Mammary epithelial cell (primary cell): ENCODE measurements at regions of chr6 and their contacts with region 1.

Region 1: DNA sequence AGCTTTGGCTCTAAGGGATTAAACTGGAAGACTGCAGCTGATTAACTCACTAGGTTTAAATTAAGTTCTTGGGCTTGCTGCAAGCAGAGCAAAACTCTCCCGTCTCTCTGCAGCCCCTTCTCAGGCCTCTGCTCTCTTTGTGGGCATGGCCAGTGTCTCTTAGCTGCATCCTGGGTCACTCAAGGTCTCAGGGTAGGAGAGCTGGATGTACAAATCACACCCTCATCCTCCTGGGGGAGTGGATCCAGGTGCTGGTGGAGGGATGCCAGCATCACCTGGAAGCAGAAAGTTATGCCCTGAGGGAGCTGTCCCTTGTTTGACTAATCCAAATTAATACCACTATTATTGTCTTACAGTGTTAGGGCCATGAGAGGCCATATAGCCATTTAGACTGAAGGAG is 35.8 kb downstream of the GCM1 start:
- DNase-seq: peak; percentile 77
- H3K4me3 ChIP-seq: no peak overlapping the region
- H3K27ac ChIP-seq: peak overlapping the region; percentile 68
- H3K4me1 ChIP-seq: peaks cover 30% of the 10 kb centered on the region
- H3K27me3 ChIP-seq: no peaks in the 10 kb centered on the region
- CTCF ChIP-seq: no peak

Region 2: GRCh38 chr6:52712136-52712535 is 400.8 kb before region 1 on chr6:
- CTCF ChIA-PET with region 1: no interaction called
- dilution Hi-C with region 1: no loop called
- in situ Hi-C with region 1: no loop called
- intact Hi-C with region 1: no loop called
- DNase-seq: peak; percentile 46
- H3K4me3 ChIP-seq: no peak overlapping the region
- H3K27ac ChIP-seq: no peak overlapping the region
- H3K4me1 ChIP-seq: peaks cover 2% of the 10 kb centered on the region
- H3K27me3 ChIP-seq: no peaks in the 10 kb centered on the region
- CTCF ChIP-seq: no peak

Region 3: GRCh38 chr6:52929321-52930164 is 183.3 kb before region 1 on chr6:
- CTCF ChIA-PET with region 1: no interaction called
- dilution Hi-C with region 1: no loop called
- in situ Hi-C with region 1: no loop called
- intact Hi-C with region 1: no loop called
- DNase-seq: peak; percentile 86
- H3K4me3 ChIP-seq: no peak overlapping the region
- H3K27ac ChIP-seq: peak overlapping the region; percentile 62
- H3K4me1 ChIP-seq: peaks cover 23% of the 10 kb centered on the region
- H3K27me3 ChIP-seq: peaks cover 2% of the 10 kb centered on the region
- CTCF ChIP-seq: peak in 1 of 2 donors; percentile 18

Region 4: DNA sequence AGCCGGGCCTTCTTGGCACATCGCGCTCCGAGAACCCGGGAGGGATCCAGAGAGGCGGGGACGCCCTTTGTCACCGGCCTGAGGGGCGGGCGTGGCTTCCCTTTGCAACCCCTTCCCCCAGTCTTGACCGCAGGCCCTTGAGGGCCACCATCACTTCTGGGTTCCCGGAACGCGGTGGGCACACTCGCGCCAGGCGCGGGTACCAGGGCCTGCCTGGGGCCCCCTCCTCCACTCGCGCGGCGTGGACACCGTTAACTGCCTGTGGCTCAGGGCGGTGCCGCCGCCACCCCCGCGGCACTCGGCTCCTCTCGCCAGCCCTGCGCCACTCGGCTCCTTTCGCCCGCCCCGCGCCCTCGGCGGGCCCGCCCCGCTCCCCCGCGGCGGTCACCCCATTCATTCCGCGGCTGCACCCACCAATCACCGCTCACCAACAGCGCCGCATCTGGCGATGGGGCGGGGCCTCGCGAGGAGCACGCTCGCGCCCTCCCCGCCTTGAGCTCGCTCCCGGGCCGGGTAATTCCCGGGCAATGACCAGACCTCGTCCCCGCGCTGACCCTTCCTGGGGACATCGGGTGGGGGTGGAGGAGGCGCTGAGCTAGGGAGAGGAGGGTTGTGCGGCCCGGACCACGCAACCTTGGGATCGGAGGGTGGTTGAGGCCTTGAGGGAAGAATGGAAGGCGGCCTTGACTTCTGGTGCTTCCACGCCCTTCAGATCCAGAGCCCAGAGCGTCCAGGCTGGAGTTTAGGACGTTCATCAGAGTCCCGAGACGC is 246.4 kb after region 1 on chr6:
- CTCF ChIA-PET with region 1: no interaction called
- dilution Hi-C with region 1: no loop called
- in situ Hi-C with region 1: no loop called
- intact Hi-C with region 1: loop called (anchors 1 kb)
- DNase-seq: peak; percentile 95
- H3K4me3 ChIP-seq: peak overlapping the region; percentile 45 to 60 (median 51)
- H3K27ac ChIP-seq: peak overlapping the region; percentile 93
- H3K4me1 ChIP-seq: peaks cover 34% of the 10 kb centered on the region
- H3K27me3 ChIP-seq: no peaks in the 10 kb centered on the region
- CTCF ChIP-seq: no peak